ENCODE measurements at regions of chr2 and their contacts with region 1.

Region 1: DNA sequence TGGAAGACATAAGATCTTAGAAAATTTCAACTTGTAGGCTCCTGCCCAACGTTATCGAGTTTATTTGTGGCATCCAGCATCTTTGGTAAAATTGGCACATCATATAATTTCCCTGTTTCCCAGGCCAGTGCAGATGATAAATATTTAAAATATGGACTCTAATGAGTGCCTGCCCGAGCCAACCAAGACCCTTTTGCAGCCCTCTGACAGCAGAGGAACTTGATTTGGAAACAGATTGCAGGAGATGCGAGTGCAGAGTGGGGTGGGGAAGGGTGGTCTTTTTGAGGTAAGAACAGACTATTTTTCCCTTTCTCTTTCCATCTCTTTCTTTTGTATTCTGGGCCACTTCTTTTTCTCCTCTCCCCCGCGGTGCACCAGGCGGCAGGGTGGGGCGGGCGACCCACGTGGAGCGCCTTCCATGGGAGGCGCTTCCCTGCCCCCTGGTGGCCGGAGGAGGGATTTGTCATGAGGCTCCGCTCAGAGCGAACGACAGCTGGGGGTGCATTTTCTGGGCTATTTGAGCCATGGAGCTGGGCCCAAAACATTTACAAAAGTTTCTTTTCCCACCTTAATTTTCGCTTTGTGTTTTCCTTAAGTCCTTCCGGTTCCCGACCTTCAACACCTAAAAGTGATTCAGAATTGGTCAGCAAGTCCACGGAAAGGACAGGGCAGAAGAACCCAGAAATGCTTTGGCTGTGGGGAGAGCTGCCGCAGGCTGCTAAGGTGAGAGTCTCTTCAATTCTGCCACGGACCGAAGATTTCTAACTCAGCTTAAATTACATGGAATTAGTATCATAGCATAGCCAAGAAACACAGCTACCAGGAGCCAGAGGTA is 32.7 kb downstream of the LPIN1 start:
- DNase-seq: peak; percentile 95
- H3K4me3 Mint-ChIP-seq: peak overlapping the region; percentile 74
- H3K27ac Mint-ChIP-seq: peak overlapping the region; percentile 55
- H3K4me1 Mint-ChIP-seq: peaks cover 32% of the 10 kb centered on the region
- H3K27me3 Mint-ChIP-seq: no peaks in the 10 kb centered on the region

Region 2: GRCh38 chr2:11688222-11689069 is 90.7 kb before region 1 on chr2:
- intact Hi-C with region 1: loop called (anchors 1 kb)
- DNase-seq: peak; percentile 96
- H3K4me3 Mint-ChIP-seq: peak overlapping the region; percentile 74
- H3K27ac Mint-ChIP-seq: peak overlapping the region; percentile 23
- H3K4me1 Mint-ChIP-seq: peaks cover 15% of the 10 kb centered on the region
- H3K27me3 Mint-ChIP-seq: peaks cover 8% of the 10 kb centered on the region

Region 3: DNA sequence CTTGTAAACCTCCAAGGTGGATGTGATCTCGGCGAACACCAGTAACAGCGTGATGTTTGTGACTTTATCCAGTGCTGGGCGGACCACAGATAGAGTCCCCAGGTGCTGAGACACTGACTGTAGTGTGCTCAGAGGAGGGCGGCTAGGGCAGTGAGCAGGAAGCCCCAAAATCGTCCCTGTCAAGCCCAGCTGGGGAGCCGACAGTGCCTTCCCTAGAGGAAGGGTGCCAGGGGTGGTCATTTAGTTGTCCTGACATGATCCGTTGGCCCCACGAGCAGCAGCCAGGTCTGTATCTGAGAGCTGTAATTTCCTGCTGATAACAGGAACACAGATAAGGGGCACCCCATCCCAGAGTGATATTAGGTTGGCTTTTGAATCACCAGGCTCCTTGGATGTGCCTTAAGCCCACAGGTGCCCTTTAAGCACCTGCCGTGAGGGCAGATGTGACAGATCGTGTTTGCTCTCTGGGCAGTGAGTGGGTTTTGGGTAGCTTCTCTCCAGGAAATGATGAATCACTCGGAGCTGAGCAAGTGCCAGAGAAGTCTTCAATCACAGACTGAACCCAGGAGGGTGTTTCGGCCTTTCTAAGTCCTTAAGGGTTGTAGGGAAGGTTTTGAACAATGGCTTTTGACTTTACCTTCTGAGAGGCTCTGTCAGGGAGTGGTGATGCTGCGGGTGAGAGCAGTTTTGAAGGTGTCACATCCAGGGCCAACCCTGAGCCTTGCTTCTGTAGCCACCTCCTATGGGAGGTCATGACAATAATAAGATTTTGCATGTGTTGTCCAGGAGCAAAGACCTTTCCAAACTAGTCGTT is 25.0 kb before region 1 on chr2:
- intact Hi-C with region 1: loop called (anchors 1 kb)
- DNase-seq: peak; percentile 87
- H3K4me3 Mint-ChIP-seq: peak overlapping the region; percentile 80
- H3K27ac Mint-ChIP-seq: peak overlapping the region; percentile 89
- H3K4me1 Mint-ChIP-seq: peaks cover 71% of the 10 kb centered on the region
- H3K27me3 Mint-ChIP-seq: no peaks in the 10 kb centered on the region

Measured in activated CD4-positive, alpha-beta T cell treated with anti-CD3 and anti-CD28 coated beads, Interleukin-2, amount 10 ng/mL, durations not matched to agents 24 days and 14 days (primary cell).